Sciatic nerve (tissue), 2 donors: ENCODE measurements at regions of chr3 and their contacts with region 1.

Region 1: GRCh38 chr3:150721285-150722130 is 17.8 kb upstream of the ERICH6 start:
- DNase-seq: no peak
- ATAC-seq: peak; percentile 77

Region 2: GRCh38 chr3:150868282-150868681 is 146.8 kb after region 1 on chr3:
- intact Hi-C with region 1: loop called (anchors 10 kb)
- DNase-seq: no peak
- ATAC-seq: peak; percentile 76

Region 3: GRCh38 chr3:150899141-150899540 is 177.6 kb after region 1 on chr3:
- intact Hi-C with region 1: no loop called
- DNase-seq: no peak
- ATAC-seq: no peak

Region 4: GRCh38 chr3:151146071-151146730 is 424.7 kb after region 1 on chr3:
- intact Hi-C with region 1: loop called (anchors 10 kb)
- DNase-seq: peak; percentile 82
- ATAC-seq: peak; percentile 93